ENCODE measurements at regions of chr7 and their contacts with region 1.

Region 1: GRCh38 chr7:45923290-45923689 is 2.2 kb upstream of the IGFBP3 start:
- DNase-seq: peak in 1 of 2 experiments; percentile 81
- ATAC-seq: peak in 1 of 2 experiments; percentile 64; a peak in 3 of 6 replicates
- H3K4me3 ChIP-seq: peak overlapping the region; percentile 66; the same call in 2 of the 3 replicates
- H3K27ac ChIP-seq: peak overlapping the region; percentile 77 to 92
- H3K4me1 ChIP-seq: peaks cover 49% of the 10 kb centered on the region
- CTCF ChIP-seq: peak; percentile 95
- EP300 ChIP-seq: no peak
- POLR2A ChIP-seq: no peak
- RAD21 ChIP-seq: peak; percentile 99

Region 2: GRCh38 chr7:45911306-45911705 is 12.0 kb before region 1 on chr7:
- CTCF ChIA-PET with region 1: interaction called, 13 read pairs
- POLR2A ChIA-PET with region 1: interaction called, 3 read pairs
- DNase-seq: no peak
- ATAC-seq: peak; percentile 13 to 54; a peak in 5 of 6 replicates
- H3K4me3 ChIP-seq: no peak overlapping the region
- H3K27ac ChIP-seq: no peak overlapping the region
- H3K4me1 ChIP-seq: no peaks in the 10 kb centered on the region
- CTCF ChIP-seq: no peak
- EP300 ChIP-seq: no peak
- POLR2A ChIP-seq: no peak
- RAD21 ChIP-seq: no peak

Region 3: GRCh38 chr7:45978010-45978681 is 54.9 kb after region 1 on chr7:
- CTCF ChIA-PET with region 1: interaction called, 57 read pairs
- POLR2A ChIA-PET with region 1: interaction called, 9 read pairs
- DNase-seq: peak; percentile 99
- ATAC-seq: peak; percentile 89 to 95
- H3K4me3 ChIP-seq: no peak overlapping the region
- H3K27ac ChIP-seq: peak overlapping the region; percentile 97 to 98
- H3K4me1 ChIP-seq: peaks cover 70% of the 10 kb centered on the region
- CTCF ChIP-seq: no peak
- EP300 ChIP-seq: peak; percentile 95
- POLR2A ChIP-seq: no peak
- RAD21 ChIP-seq: peak; percentile 44 to 60; a peak in 4 of 5 replicates

Region 4: DNA sequence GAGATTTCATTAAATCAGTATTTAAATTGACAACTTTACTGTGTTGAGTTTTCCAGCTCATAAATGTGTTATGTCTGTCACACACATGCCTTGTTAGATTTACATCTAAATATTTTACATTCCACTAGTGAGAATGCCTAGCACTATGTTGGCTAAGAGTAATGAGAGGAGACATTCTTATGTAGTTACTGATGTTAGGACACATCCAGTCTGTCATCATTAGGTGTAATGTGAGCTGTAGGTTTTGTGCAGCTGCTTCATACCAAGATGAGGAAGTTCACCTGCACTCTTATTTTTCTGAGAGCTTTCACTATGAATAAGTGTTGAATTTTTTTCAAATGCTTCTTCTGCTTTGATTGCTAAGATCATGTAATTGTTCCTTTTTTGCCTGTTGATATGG is 215.8 kb after region 1 on chr7:
- CTCF ChIA-PET with region 1: interaction called, 38 read pairs
- POLR2A ChIA-PET with region 1: interaction called, 4 read pairs
- DNase-seq: peak in 1 of 2 experiments; percentile 72
- ATAC-seq: peak; percentile 82 to 89; a peak in 5 of 6 replicates
- H3K4me3 ChIP-seq: no peak overlapping the region
- H3K27ac ChIP-seq: peak overlapping the region; percentile 50 to 53
- H3K4me1 ChIP-seq: peaks cover 19% of the 10 kb centered on the region
- CTCF ChIP-seq: no peak
- EP300 ChIP-seq: peak; percentile 21 to 71; a peak in 1 of 5 replicates
- POLR2A ChIP-seq: no peak
- RAD21 ChIP-seq: 0 out of 5 replicates have a peak, but pooled peaks have one; percentile 2 to 17

Region 5: DNA sequence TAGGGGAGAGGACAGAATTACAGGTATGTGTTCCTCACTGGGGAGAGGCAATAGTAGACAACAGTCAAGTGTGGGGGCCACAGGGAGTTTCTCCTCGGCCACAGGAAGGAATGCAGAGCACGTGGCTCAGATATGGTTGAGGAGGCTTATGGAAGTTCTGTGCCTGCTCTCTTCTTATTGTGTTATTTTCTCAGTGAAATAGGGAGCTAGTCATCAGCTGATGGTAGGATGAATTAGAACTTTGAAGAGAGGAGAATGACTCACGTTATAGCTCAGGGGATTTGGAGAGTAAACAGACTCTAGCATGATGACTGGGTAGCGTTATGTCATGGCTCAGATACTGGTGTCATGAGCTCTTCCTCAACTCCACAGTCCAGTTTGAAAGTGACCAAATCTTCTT is 306.1 kb after region 1 on chr7:
- CTCF ChIA-PET with region 1: interaction called, 12 read pairs
- POLR2A ChIA-PET with region 1: no interaction called
- DNase-seq: peak; percentile 33 to 73
- ATAC-seq: peak; percentile 86 to 97
- H3K4me3 ChIP-seq: no peak overlapping the region
- H3K27ac ChIP-seq: peak overlapping the region; percentile 22 to 67; a peak in 4 of 6 replicates
- H3K4me1 ChIP-seq: peaks cover 37% of the 10 kb centered on the region
- CTCF ChIP-seq: no peak
- EP300 ChIP-seq: peak in 1 of 2 experiments; percentile 25; a peak in 1 of 5 replicates
- POLR2A ChIP-seq: no peak
- RAD21 ChIP-seq: peak in 1 of 2 experiments; percentile 18; a peak in 1 of 5 replicates

Region 6: DNA sequence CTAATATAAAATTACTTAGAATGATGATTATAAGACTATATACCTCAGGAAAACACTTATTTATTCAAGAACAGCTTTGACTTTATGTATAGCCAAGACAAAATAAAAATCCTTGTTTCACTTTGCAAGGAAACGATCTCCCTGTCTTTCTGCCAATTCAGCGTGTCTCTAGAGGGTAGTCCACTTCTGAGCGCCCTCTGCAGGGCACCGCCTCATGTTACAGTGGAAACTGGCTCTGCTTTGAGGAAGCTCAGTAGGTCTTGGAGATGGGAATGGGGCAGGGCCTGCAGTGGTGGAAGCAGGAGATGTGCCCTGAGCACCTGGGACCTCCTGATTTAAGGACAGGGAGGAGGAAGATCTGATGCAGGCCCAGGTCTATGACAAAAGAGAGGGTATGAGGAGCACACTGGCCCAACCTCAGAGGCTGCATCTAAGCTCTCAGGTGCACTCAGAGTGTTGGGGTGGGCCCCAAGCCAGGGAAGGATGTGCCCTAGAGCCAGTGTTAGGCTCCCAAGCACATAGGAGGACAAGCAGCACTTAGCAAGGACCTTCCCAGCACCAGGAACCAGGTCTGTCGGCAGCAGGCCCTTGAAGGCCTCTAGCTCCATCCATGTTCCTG is 1177.6 kb after region 1 on chr7:
- CTCF ChIA-PET with region 1: interaction called, 40 read pairs
- POLR2A ChIA-PET with region 1: interaction called, 3 read pairs
- DNase-seq: peak; percentile 45 to 79
- ATAC-seq: peak; percentile 92 to 97
- H3K4me3 ChIP-seq: peak overlapping the region; percentile 28; the same call in 2 of the 3 replicates
- H3K27ac ChIP-seq: peak overlapping the region; percentile 23 to 31; a peak in 1 of 6 replicates
- H3K4me1 ChIP-seq: peaks cover 4% of the 10 kb centered on the region; the same call in 1 of the 3 replicates
- CTCF ChIP-seq: peak; percentile 68
- EP300 ChIP-seq: no peak
- POLR2A ChIP-seq: no peak
- RAD21 ChIP-seq: peak; percentile 56 to 62

Measured in A549 (cell line).